Tibial artery (tissue), 4 donors: ENCODE measurements at regions of chr7 and their contacts with region 1.

Region 1: GRCh38 chr7:2670720-2671391 is 17.1 kb upstream of the AMZ1 start:
- DNase-seq: peak in 1 of 2 donors; percentile 51
- H3K4me3 ChIP-seq: no peak overlapping the region
- H3K27ac ChIP-seq: no peak overlapping the region
- H3K4me1 ChIP-seq: peaks cover 0 to 10% (median 0%) of the 10 kb centered on the region in 4 donors
- H3K27me3 ChIP-seq: peaks cover 0 to 6% of the 10 kb centered on the region in 2 donors
- CTCF ChIP-seq: peak; percentile 82 to 86

Region 2: GRCh38 chr7:2709553-2710285 is 38.9 kb after region 1 on chr7:
- intact Hi-C with region 1: loop called (anchors 5 kb)
- DNase-seq: peak in 1 of 2 donors; percentile 43
- H3K4me3 ChIP-seq: no peak overlapping the region
- H3K27ac ChIP-seq: no peak overlapping the region
- H3K4me1 ChIP-seq: peaks cover 0 to 7% (median 0%) of the 10 kb centered on the region in 4 donors
- H3K27me3 ChIP-seq: no peaks in the 10 kb centered on the region
- CTCF ChIP-seq: peak; percentile 54 to 74